ENCODE measurements at regions of chr3 and their contacts with region 1.

Region 1: GRCh38 chr3:170357176-170357919 is at the start of gene SKIL:
- DNase-seq: peak; percentile 99
- H3K4me3 ChIP-seq: peak within 1 kb of the TSS; percentile 87 to 100 (median 98)
- H3K27ac ChIP-seq: peak within 1 kb of the TSS; percentile 96 to 100 (median 100)
- H3K4me1 ChIP-seq: peaks cover 0 to 53% (median 33%) of the 10 kb centered on the region in 4 donors
- H3K27me3 ChIP-seq: no peaks in the 10 kb centered on the region
- CTCF ChIP-seq: no peak
- EP300 ChIP-seq: peak in 2 of 4 donors; percentile 4 to 30
- POLR2A ChIP-seq: no peak
- total RNA-seq, gene SKIL: 24.8 to 52.6 (median 29.8) TPM

Region 2: GRCh38 chr3:169772897-169773828 is 584.2 kb before region 1 on chr3 and contains the start of gene MYNN:
- intact Hi-C with region 1: loop called (anchors 2 kb)
- DNase-seq: peak; percentile 96
- H3K4me3 ChIP-seq: peak within 1 kb of the TSS; percentile 68 to 94 (median 87)
- H3K27ac ChIP-seq: peak within 1 kb of the TSS; percentile 91 to 99 (median 98)
- H3K4me1 ChIP-seq: peaks cover 0 to 31% (median 23%) of the 10 kb centered on the region in 4 donors
- H3K27me3 ChIP-seq: no peaks in the 10 kb centered on the region
- CTCF ChIP-seq: no peak
- EP300 ChIP-seq: no peak
- POLR2A ChIP-seq: peak; percentile 99
- total RNA-seq, gene MYNN: 15.5 to 24.4 (median 21.2) TPM

Region 3: GRCh38 chr3:169966428-169966950 is 390.9 kb before region 1 on chr3 and contains the start of gene SEC62:
- intact Hi-C with region 1: loop called (anchors 5 kb)
- DNase-seq: peak; percentile 97
- H3K4me3 ChIP-seq: peak within 1 kb of the TSS; percentile 84 to 96 (median 90)
- H3K27ac ChIP-seq: peak within 1 kb of the TSS; percentile 95 to 99 (median 98)
- H3K4me1 ChIP-seq: peaks cover 0 to 48% (median 32%) of the 10 kb centered on the region in 4 donors
- H3K27me3 ChIP-seq: no peaks in the 10 kb centered on the region
- CTCF ChIP-seq: peak; percentile 10 to 53 (median 24)
- EP300 ChIP-seq: peak in 1 of 4 donors; percentile 24
- POLR2A ChIP-seq: peak; percentile 59 to 68
- total RNA-seq, gene SEC62: 77.7 to 82.6 (median 79.8) TPM

Region 4: GRCh38 chr3:170180908-170181879 is 176.2 kb before region 1 on chr3 and contains the start of gene PHC3:
- intact Hi-C with region 1: loop called (anchors 2 kb)
- DNase-seq: peak; percentile 96
- H3K4me3 ChIP-seq: peak within 1 kb of the TSS; percentile 67 to 99 (median 80)
- H3K27ac ChIP-seq: peak within 1 kb of the TSS; percentile 90 to 100 (median 95)
- H3K4me1 ChIP-seq: peaks cover 0 to 27% (median 19%) of the 10 kb centered on the region in 4 donors
- H3K27me3 ChIP-seq: no peaks in the 10 kb centered on the region
- CTCF ChIP-seq: peak in 1 of 4 experiments; percentile 12
- EP300 ChIP-seq: no peak
- POLR2A ChIP-seq: peak; percentile 74 to 84
- total RNA-seq, gene PHC3: 56.4 to 85.9 (median 70.3) TPM

Region 5: DNA sequence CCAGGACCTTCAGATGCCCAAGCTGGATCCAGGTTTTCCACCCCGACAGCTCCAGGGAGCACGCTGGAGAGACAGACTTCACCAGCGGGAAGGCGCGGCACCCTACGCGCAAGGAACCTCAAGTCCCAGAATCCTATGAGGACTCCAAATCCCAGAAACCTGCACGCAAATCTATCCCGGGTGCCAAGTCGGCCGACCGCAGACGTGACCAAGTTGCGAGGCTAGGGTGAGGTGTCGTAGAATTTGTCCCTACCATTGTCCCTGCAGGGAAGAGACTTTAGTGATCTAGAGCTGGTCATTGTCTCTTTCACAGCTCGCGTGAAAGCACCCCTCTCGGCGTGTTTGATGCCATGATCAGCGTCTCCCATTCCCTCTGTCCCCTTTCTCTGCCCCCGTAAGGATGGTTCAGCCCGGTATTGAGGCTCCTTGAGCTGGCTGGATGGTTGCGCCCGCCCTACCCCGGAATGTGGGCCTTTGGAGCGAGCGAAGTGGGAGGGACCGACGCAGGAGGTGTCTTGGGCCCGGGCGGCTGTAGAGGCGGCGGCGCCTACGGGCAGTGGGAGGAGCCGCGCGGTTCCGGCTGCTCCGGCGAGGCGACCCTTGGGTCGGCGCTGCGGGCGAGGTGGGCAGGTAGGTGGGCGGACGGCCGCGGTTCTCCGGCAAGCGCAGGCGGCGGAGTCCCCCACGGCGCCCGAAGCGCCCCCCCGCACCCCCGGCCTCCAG is 135.3 kb before region 1 on chr3 and contains the start of gene PRKCI:
- intact Hi-C with region 1: loop called (anchors 2 kb)
- DNase-seq: peak; percentile 97
- H3K4me3 ChIP-seq: peak within 1 kb of the TSS; percentile 83 to 99 (median 90)
- H3K27ac ChIP-seq: peak within 1 kb of the TSS; percentile 90 to 94 (median 91)
- H3K4me1 ChIP-seq: peaks cover 0 to 23% (median 9%) of the 10 kb centered on the region in 4 donors
- H3K27me3 ChIP-seq: no peaks in the 10 kb centered on the region
- CTCF ChIP-seq: no peak
- EP300 ChIP-seq: no peak
- POLR2A ChIP-seq: peak; percentile 35 to 38
- total RNA-seq, gene PRKCI: 23.9 to 33.2 (median 28.1) TPM

Region 6: DNA sequence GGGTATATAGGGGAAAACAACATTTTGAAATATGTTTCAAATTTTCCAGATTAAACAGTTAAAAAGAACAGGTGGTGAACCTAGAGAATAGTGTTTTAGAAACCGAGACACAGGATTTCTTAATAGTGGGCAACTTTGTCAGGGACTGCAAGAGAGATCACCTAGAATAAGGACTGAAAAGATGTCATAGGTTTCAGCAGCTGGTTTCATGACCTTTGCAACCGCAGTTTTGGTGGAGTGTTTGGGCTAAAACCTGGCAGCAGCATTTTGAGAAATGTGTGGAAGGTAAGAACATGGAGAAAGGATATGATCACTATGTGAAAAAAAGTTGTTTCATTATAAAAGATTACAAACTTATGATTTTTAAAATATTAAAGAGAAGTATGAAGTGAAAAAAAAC is 100.2 kb before region 1 on chr3:
- intact Hi-C with region 1: no loop called
- DNase-seq: no peak
- H3K4me3 ChIP-seq: no peak overlapping the region
- H3K27ac ChIP-seq: no peak overlapping the region
- H3K4me1 ChIP-seq: no peaks in the 10 kb centered on the region
- H3K27me3 ChIP-seq: no peaks in the 10 kb centered on the region
- CTCF ChIP-seq: no peak
- EP300 ChIP-seq: no peak
- POLR2A ChIP-seq: no peak

Region 7: GRCh38 chr3:170307671-170308403 is 49.5 kb before region 1 on chr3:
- intact Hi-C with region 1: loop called (anchors 5 kb)
- DNase-seq: no peak
- H3K4me3 ChIP-seq: no peak overlapping the region
- H3K27ac ChIP-seq: no peak overlapping the region
- H3K4me1 ChIP-seq: peaks cover 0 to 7% (median 0%) of the 10 kb centered on the region in 4 donors
- H3K27me3 ChIP-seq: no peaks in the 10 kb centered on the region
- CTCF ChIP-seq: no peak
- EP300 ChIP-seq: no peak
- POLR2A ChIP-seq: no peak

Measured in sigmoid colon (tissue), 7 donors.